HepG2 (cell line): ENCODE measurements at regions of chr6 and their contacts with region 1.

Region 1: DNA sequence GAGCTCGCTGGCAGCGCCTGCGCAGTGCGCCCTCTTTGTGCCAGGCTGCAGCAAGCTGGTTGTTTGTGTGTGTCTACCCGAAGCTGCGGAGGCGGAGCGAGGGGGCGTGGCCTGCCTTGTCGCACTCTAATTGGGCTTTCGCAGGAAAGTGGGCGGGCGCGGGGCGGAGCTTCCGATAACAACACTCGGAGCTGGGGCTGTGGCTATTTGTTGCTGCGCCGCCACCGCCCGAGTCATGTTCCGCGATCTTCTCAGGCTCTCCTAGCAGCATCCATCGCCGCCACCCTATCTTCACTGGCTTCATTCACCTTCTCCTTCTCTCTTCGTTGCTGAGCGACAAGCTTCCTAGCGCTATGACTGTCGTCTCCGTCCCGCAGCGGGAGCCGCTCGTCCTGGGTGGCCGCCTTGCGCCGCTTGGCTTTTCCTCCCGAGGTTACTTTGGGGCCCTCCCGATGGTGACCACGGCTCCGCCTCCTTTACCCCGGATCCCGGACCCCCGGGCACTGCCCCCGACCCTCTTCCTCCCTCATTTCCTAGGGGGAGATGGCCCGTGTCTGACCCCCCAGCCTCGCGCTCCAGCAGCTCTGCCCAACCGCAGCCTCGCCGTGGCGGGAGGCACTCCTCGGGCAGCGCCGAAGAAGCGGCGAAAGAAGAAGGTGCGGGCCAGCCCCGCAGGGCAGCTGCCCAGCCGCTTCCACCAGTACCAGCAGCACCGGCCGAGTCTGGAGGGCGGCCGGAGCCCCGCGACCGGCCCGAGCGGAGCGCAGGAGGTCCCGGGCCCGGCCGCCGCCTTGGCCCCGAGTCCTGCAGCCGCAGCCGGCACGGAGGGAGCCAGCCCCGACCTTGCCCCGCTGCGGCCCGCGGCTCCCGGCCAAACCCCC is at the start of gene PNRC1:
- DNase-seq: peak; percentile 95
- ATAC-seq: peak; percentile 80
- H3K4me3 ChIP-seq: peak within 1 kb of the TSS; percentile 89 to 100 (median 95)
- H3K27ac ChIP-seq: peak within 1 kb of the TSS; percentile 96
- H3K4me1 ChIP-seq: peaks cover 31% of the 10 kb centered on the region
- H3K27me3 ChIP-seq: no peaks in the 10 kb centered on the region; a peak in 1 of 5 replicates
- CTCF ChIP-seq: peak; percentile 40; the same call in 1 of the 2 replicates
- EP300 ChIP-seq: 0 out of 4 replicates have a peak, but pooled peaks of 1 of the 2 experiments have one; percentile 6
- POLR2A ChIP-seq: peak; percentile 99 to 100
- RAD21 ChIP-seq: peak; percentile 13; the same call in 1 of the 2 replicates
- total RNA-seq, gene PNRC1: 31.0 and 36.0 TPM in 2 replicates

Region 2: DNA sequence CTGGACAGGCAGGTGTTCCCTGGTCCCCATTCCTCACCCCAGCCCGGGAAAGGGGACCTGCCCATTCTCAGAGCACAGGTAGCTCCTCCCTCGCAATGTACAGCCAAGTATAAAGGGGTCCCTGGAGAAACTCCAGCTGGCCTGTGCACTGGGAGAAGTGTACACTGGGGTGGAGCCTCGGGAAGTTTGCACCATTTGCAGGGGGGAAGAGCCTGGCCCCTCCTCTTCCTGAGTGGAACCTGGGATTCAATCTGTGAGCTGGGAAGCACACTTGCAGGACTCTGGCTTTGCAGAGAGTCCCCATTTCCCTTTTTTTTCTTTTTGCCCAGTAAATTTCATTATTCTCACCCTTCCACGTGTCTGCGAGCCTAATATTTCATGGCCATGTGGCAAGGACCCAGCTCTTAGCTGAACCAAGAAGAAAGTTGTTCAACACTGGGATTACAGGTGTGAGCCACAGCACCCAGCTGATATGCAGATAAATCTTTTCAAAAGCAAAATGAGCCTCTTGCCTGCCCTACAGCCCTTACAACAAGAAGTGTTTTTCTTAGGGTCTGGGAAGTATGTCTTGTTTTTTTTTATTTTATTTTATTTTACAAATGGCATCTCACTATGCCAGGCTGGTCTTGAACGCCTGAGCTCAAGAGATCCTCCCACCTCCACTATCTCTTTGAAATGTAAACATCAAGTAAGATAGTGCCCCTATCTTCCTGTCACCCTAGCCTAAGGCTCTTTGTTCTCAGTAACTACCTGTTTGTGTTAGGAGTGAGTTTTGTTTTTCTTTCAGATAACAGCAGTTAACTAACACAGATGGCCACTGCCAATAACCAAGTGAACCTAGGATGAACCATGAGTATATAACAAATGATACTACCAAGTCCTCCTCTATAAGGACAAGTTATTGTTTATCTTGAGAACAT is 108.0 kb before region 1 on chr6:
- CTCF ChIA-PET with region 1: no interaction called
- POLR2A ChIA-PET with region 1: interaction called, 12 read pairs
- in situ Hi-C with region 1: no loop called
- intact Hi-C with region 1: no loop called
- DNase-seq: peak; percentile 88
- ATAC-seq: peak; percentile 89
- H3K4me3 ChIP-seq: no peak overlapping the region; a peak in 1 of 6 replicates
- H3K27ac ChIP-seq: peak overlapping the region; percentile 14
- H3K4me1 ChIP-seq: peaks cover 89% of the 10 kb centered on the region
- H3K27me3 ChIP-seq: no peaks in the 10 kb centered on the region
- CTCF ChIP-seq: no peak
- EP300 ChIP-seq: peak in 1 of 2 experiments; percentile 95; a peak in 2 of 4 replicates
- POLR2A ChIP-seq: no peak
- RAD21 ChIP-seq: no peak

Region 3: DNA sequence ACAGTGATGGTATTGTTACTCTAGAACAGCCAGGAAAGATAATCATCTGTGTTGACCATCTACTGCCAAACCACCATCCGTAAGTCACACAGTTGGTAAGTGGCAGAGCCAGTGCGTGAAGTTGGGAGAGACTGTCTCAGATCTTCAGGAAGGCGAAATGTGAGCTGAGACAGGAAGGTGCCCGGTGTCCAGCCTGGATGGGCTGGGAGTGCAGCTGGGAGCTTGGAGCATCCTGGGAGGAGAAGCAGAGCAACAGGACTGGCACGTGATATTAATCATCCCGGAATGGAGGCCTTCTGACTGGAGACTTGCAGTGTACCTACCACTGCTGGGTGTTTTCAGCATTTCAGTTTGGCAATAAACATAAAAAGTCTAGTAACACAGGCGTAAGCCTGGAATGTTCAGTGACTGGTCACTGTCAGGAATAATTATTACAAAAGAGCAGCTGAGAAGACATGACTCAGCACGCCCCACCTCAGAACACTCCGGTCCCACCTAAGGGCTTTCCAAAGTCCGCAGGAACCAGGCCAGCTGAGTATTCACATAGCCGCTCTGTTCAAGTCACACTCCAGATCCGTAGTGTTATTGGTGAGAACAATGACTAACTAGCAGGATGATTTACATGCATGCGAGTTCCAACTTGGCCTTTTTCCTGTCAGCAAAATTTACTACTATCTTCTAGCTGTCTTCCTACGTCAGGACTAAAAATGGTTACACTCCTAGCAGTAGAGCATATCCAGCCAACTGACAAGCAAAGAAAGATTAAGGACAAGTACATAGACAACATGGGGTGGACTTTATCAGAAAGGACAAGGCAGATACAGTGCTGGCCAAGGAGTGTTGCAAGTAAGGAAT is 45.3 kb before region 1 on chr6:
- CTCF ChIA-PET with region 1: no interaction called
- POLR2A ChIA-PET with region 1: interaction called, 35 read pairs
- in situ Hi-C with region 1: no loop called
- intact Hi-C with region 1: loop called (anchors 2 kb)
- DNase-seq: peak; percentile 73
- ATAC-seq: peak; percentile 87
- H3K4me3 ChIP-seq: peak overlapping the region; percentile 20 to 69 (median 59)
- H3K27ac ChIP-seq: peak overlapping the region; percentile 73
- H3K4me1 ChIP-seq: peaks cover 35% of the 10 kb centered on the region
- H3K27me3 ChIP-seq: no peaks in the 10 kb centered on the region; a peak in 1 of 5 replicates
- CTCF ChIP-seq: no peak
- EP300 ChIP-seq: peak in 1 of 2 experiments; percentile 28; a peak in 1 of 4 replicates
- POLR2A ChIP-seq: peak in 1 of 2 experiments; percentile 53; a peak in 2 of 4 replicates
- RAD21 ChIP-seq: no peak

Region 4: DNA sequence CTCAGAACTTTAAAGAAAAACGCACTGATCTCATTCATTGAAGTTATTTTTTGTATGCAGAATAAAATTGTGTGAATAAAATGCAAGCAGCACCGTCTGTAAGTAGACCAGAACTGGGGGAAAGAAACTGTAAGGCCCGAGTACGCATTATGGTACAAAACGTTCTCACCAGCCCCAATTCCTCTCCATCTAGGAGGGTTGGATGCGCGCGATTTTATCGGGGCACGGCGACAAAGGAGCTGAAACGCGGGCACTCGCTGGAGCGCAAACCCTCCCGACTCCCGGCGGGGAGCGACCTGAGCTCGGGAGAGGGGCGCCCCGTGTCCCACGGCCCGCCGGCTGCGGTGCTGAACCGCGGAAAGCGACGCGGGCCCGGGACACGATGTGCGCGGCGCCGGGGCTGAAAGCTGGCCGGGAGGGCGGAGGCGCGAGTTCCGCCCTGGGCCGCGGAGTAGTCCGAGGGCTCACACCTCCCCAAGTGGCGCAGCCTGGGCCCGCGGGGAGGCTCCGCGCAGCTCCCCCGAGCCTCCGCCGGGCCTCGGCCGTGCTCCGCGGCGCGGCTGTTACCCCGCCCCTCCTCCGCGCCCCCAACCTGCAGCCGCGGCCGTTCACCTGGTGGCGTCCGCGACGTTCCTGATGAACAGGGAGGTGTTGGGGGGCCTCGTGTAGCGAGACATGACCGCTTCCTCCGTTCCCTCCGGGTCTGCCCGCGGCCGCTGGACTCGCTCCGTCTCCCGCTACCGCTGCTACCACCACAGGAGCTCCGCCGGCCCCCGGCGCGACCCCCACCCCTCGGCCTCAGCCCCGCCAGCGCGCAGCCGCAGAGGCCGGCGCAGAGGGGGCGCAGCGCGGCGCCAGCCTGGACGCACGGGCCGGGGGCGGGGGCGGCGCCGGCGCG is 36.7 kb after region 1 on chr6 and contains the start of gene SRSF12:
- CTCF ChIA-PET with region 1: no interaction called
- POLR2A ChIA-PET with region 1: interaction called, 12 read pairs
- in situ Hi-C with region 1: no loop called
- intact Hi-C with region 1: no loop called
- DNase-seq: no peak
- ATAC-seq: peak; percentile 91
- H3K4me3 ChIP-seq: peak within 1 kb of the TSS; percentile 64 to 79 (median 78)
- H3K27ac ChIP-seq: no peak within 1 kb of the TSS
- H3K4me1 ChIP-seq: peaks cover 38% of the 10 kb centered on the region
- H3K27me3 ChIP-seq: no peaks in the 10 kb centered on the region
- CTCF ChIP-seq: peak; percentile 13; the same call in 1 of the 2 replicates
- EP300 ChIP-seq: no peak
- POLR2A ChIP-seq: no peak
- RAD21 ChIP-seq: no peak
- total RNA-seq, gene SRSF12: 1.9 TPM in 2 replicates

Region 5: DNA sequence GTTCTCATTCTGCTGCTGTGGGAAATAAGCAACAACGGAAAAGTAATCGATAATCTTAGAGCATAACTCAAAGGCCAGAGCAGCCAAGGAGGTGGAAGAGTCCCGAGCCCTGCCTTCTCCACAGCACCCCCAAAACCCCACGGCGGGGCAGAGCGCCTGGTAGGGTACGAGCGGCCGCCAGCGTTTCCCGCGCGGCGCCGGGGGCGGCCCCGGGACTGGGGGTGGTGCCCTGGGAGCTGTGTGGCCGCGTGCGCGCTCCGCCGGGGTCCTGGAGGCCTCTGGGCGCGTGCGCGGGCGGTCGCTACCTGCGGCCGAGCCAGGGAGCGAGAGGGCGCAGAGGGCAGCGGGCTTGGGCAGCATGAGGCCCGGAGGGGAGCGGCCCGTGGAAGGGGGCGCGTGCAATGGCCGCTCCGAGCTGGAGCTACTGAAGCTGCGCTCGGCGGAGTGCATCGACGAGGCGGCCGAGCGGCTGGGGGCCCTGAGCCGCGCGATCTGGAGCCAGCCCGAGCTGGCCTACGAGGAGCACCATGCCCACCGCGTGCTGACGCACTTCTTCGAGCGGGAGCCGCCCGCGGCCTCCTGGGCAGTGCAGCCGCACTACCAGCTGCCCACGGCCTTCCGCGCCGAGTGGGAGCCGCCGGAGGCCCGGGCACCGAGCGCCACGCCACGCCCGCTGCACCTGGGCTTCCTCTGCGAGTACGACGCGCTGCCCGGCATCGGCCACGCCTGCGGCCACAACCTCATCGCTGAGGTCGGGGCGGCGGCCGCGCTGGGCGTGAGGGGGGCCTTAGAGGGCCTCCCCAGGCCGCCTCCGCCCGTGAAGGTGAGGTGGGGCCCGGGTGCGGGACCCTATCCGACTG is 65.2 kb after region 1 on chr6 and contains the start of gene PM20D2:
- CTCF ChIA-PET with region 1: no interaction called
- POLR2A ChIA-PET with region 1: interaction called, 20 read pairs
- in situ Hi-C with region 1: no loop called
- intact Hi-C with region 1: loop called (anchors 5 kb)
- DNase-seq: peak; percentile 58
- ATAC-seq: peak; percentile 96
- H3K4me3 ChIP-seq: peak within 1 kb of the TSS; percentile 76 to 77 (median 77)
- H3K27ac ChIP-seq: peak within 1 kb of the TSS; percentile 79
- H3K4me1 ChIP-seq: peaks cover 45% of the 10 kb centered on the region
- H3K27me3 ChIP-seq: no peaks in the 10 kb centered on the region; a peak in 2 of 5 replicates
- CTCF ChIP-seq: no peak
- EP300 ChIP-seq: no peak
- POLR2A ChIP-seq: peak; percentile 64 to 94; a peak in 3 of 4 replicates
- RAD21 ChIP-seq: peak; percentile 42
- total RNA-seq, gene PM20D2: 26.3 and 35.8 TPM in 2 replicates

Region 6: GRCh38 chr6:89221971-89222711 is 141.4 kb after region 1 on chr6:
- CTCF ChIA-PET with region 1: no interaction called
- POLR2A ChIA-PET with region 1: no interaction called
- in situ Hi-C with region 1: no loop called
- intact Hi-C with region 1: no loop called
- DNase-seq: no peak
- ATAC-seq: no peak
- H3K4me3 ChIP-seq: no peak overlapping the region
- H3K27ac ChIP-seq: no peak overlapping the region
- H3K4me1 ChIP-seq: no peaks in the 10 kb centered on the region
- H3K27me3 ChIP-seq: 0 out of 5 replicates have a peak, but pooled peaks cover 0 to 14% of the 10 kb centered on the region in 2 experiments
- CTCF ChIP-seq: no peak
- EP300 ChIP-seq: no peak
- POLR2A ChIP-seq: no peak
- RAD21 ChIP-seq: no peak

Region 7: GRCh38 chr6:89400912-89401399 is 320.2 kb after region 1 on chr6:
- CTCF ChIA-PET with region 1: no interaction called
- POLR2A ChIA-PET with region 1: no interaction called
- in situ Hi-C with region 1: no loop called
- intact Hi-C with region 1: no loop called
- DNase-seq: no peak
- ATAC-seq: no peak
- H3K4me3 ChIP-seq: no peak overlapping the region
- H3K27ac ChIP-seq: no peak overlapping the region
- H3K4me1 ChIP-seq: no peaks in the 10 kb centered on the region
- H3K27me3 ChIP-seq: no peaks in the 10 kb centered on the region
- CTCF ChIP-seq: no peak
- EP300 ChIP-seq: no peak
- POLR2A ChIP-seq: no peak
- RAD21 ChIP-seq: no peak